Activated CD4-positive, alpha-beta memory T cell treated with anti-CD3 and anti-CD28 coated beads for 36 hours (primary cell): ENCODE measurements at regions of chr1 and their contacts with region 1.

Region 1: GRCh38 chr1:26284597-26285360 is 4.9 kb downstream of the SH3BGRL3 start:
- DNase-seq: peak; percentile 98
- H3K4me3 Mint-ChIP-seq: peak overlapping the region; percentile 68
- H3K27ac Mint-ChIP-seq: peak overlapping the region; percentile 98
- H3K4me1 Mint-ChIP-seq: peaks cover 90% of the 10 kb centered on the region
- H3K27me3 Mint-ChIP-seq: no peaks in the 10 kb centered on the region

Region 2: DNA sequence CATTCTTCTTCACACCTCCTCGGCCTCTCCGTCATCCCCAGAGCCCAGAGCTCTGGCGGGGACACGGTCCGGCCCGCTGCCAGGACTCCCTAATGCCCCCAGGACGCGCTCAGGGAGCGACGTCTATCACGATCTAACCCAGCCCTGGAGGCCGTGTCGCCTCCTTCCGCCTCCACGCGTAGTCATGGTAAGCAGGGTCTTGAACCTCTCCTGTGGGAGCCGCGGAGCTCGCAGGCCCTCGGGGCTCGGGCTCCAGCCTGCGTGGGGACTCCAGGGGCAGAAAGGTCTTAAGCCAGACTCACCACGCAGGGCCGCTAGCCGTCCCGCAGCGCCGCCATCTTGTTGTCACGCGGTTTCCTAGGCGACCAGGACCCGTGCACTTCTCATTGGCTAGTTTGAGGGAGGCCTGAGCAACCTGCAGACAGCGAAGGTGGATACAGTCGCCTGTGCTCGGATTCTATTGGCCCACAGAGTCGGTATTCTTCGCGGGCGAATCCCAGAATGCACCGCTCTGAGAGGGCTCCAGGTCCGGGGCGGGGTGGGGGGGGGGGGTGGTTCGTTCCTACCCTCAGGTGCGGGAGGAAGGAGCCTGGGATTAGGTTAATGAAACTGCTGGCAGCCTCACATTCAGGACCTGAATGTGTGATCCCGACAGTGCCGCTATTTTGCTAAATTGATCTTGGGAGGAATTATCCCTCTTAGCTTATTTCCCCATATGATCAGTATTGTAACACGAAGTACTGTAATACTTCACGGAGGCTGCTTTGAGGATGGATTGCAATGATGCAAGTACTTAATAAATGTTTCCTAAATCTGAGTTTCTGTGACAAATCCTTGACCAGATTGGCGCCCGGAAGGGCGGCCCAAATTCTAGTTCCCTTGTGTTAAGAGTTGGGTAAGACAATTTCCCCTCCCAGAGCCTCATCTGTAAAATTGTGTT is 21.8 kb after region 1 on chr1 and contains the start of gene UBXN11:
- CTCF ChIA-PET with region 1: interaction called, 886 read pairs
- POLR2A ChIA-PET with region 1: interaction called, 58 read pairs
- intact Hi-C with region 1: loop called (anchors 1 kb)
- DNase-seq: peak; percentile 97
- H3K4me3 Mint-ChIP-seq: peak within 1 kb of the TSS; percentile 95
- H3K27ac Mint-ChIP-seq: peak within 1 kb of the TSS; percentile 92
- H3K4me1 Mint-ChIP-seq: peaks cover 32% of the 10 kb centered on the region
- H3K27me3 Mint-ChIP-seq: no peaks in the 10 kb centered on the region
- total RNA-seq, gene UBXN11: 24.5 to 26.1 TPM